ENCODE measurements at regions of chr15 and their contacts with region 1.

Region 1: GRCh38 chr15:64731012-64731806 is 44.2 kb downstream of the RBPMS2 start:
- DNase-seq: peak; percentile 72
- H3K27ac ChIP-seq: no peak overlapping the region
- CTCF ChIP-seq: peak; percentile 97

Region 2: GRCh38 chr15:64149424-64149823 is 581.8 kb before region 1 on chr15:
- CTCF ChIA-PET with region 1: no interaction called
- POLR2A ChIA-PET with region 1: no interaction called
- DNase-seq: no peak
- H3K27ac ChIP-seq: no peak overlapping the region
- CTCF ChIP-seq: no peak

Region 3: GRCh38 chr15:64686216-64686631 is 45.0 kb before region 1 on chr15:
- CTCF ChIA-PET with region 1: interaction called, 57 read pairs
- POLR2A ChIA-PET with region 1: interaction called, 4 read pairs
- DNase-seq: peak; percentile 46
- H3K27ac ChIP-seq: no peak overlapping the region
- CTCF ChIP-seq: peak; percentile 92

Region 4: GRCh38 chr15:64695561-64695992 is 35.6 kb before region 1 on chr15:
- CTCF ChIA-PET with region 1: interaction called, 17 read pairs
- POLR2A ChIA-PET with region 1: interaction called, 4 read pairs
- DNase-seq: no peak
- H3K27ac ChIP-seq: no peak overlapping the region
- CTCF ChIP-seq: no peak

Region 5: GRCh38 chr15:64809649-64810496 is 78.7 kb after region 1 on chr15:
- CTCF ChIA-PET with region 1: interaction called, 96 read pairs
- POLR2A ChIA-PET with region 1: no interaction called
- DNase-seq: peak; percentile 91
- H3K27ac ChIP-seq: no peak overlapping the region
- CTCF ChIP-seq: peak; percentile 99